ENCODE measurements at regions of chr5 and their contacts with region 1.

Region 1: DNA sequence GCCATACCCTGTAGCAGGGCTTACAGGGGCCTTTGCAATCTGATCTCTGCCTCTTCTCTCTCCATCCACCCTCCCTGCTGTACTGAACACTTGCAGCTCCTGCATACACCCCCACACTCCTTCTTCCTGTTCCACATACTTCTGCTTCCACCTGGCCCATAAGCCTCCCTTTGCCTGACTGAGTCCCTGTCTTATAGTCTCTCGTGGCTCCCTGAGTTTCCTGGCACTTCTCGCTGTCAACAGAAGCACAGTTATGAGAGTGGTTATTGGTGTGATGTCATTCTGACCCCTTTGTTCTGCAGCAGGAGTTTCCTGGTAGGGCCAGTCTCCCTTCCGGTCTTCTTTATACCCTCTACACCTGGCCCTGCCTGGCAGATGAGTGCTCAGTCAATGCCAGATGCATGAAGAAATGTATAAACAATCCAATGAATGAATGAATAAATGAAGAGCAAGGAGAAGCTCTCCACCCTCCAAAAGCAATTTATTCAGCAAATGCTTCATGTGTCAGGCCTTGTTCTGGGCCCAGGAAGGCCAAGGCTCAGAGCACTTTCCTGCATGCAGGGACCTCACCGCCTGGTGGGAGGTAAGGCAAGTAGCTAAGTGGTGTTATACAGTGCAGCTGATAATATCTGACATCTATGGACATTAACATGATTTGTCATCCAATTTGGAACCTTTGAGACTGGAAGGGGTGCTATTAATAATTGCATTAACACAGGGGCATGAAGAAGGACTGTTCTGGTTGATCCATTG is 20.5 kb upstream of the CSF1R start:
- DNase-seq: no peak
- H3K4me3 ChIP-seq: no peak overlapping the region
- H3K27ac ChIP-seq: no peak overlapping the region
- H3K4me1 ChIP-seq: no peaks in the 10 kb centered on the region
- H3K27me3 ChIP-seq: no peaks in the 10 kb centered on the region
- CTCF ChIP-seq: no peak
- POLR2A ChIP-seq: no peak

Region 2: GRCh38 chr5:150058480-150059126 is 48.2 kb before region 1 on chr5:
- intact Hi-C with region 1: loop called (anchors 10 kb)
- DNase-seq: no peak
- H3K4me3 ChIP-seq: no peak overlapping the region
- H3K27ac ChIP-seq: no peak overlapping the region
- H3K4me1 ChIP-seq: no peaks in the 10 kb centered on the region
- H3K27me3 ChIP-seq: no peaks in the 10 kb centered on the region
- CTCF ChIP-seq: no peak
- POLR2A ChIP-seq: no peak

Region 3: DNA sequence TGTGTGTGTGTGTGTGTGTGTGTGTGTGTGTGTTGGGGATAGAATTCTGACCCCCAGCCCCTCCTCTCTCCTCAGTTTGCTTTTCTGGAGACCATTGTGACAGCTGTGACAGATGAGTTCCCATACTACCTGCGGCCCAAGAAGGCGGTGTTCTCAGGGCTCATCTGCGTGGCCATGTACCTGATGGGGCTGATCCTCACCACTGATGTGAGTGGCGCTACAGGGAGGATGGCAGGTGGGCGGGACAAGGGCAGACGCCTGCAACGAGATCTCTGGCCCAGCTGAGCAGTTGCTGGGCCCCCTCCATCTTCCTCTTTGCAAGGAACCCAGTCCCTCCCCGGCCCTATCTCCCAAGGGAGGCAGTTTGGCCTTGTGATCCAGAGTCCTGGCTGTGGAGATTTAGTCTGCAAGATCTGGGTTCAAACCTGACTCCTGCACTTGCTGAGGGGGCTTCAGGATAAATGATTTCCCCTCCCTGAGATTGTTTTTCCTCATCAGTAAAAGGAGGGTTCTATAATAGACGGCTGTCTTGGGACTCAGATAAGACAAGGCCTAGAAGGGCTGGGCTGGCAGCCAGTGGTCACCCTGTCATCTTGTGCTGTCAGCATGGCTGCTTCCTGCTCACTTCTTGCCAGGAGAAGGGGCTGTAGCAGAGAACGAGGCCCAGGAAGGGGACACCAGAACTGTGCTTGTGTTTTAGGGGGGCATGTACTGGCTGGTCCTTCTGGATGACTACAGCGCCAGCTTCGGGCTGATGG is 97.2 kb after region 1 on chr5:
- intact Hi-C with region 1: no loop called
- DNase-seq: no peak
- H3K4me3 ChIP-seq: no peak overlapping the region
- H3K27ac ChIP-seq: no peak overlapping the region
- H3K4me1 ChIP-seq: no peaks in the 10 kb centered on the region
- H3K27me3 ChIP-seq: no peaks in the 10 kb centered on the region
- CTCF ChIP-seq: no peak
- POLR2A ChIP-seq: no peak

Measured in uterus (tissue), 4 donors.